Natural killer cell (primary cell): ENCODE measurements at regions of chr17 and their contacts with region 1.

Region 1: DNA sequence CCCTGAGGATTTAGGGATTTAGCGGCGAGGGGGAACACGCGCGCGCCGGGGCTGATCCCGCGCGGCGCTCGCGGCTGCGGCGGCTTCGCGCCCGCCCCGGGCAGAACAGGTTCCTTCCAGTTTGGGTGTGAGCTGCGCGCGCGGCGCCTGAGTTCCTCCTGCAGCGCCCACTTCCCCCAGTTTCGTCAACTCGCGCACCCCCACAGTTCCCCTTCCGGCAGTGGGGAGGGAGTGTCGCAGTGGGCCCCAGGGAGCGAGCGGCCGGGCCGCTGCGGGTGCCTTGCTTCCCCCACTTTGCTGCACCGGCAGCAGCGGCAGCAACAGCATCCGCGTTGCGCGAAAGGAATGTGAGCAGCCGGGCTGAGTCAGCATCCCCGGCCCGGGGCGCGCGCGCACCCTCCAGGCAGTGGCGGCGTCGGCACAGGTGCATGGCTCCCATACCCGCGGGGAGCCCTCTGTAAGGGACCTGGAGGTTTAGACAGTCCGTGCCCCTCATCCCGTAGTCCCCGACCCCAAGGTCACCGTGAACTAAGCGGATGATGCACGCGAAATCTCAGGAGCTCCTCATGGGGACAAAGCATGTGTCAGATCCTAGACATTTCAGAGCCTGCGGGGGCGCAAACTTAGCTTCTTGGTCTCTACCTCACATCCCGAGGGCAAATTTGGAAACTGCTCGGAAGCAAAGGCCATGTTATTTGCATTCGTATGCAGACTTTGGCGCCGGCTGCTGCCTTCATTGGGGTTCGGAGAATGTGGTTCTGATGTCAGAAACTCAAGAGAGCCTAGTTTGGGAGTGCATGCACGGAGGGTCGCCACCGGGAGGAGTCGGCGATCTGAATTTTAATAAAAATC is 775 bp downstream of the ARSG start:
- DNase-seq: peak; percentile 93 to 98
- ATAC-seq: peak; percentile 66 to 88 (median 75)
- H3K4me3 ChIP-seq: peak overlapping the region; percentile 56
- H3K4me3 Mint-ChIP-seq: peak overlapping the region; percentile 90
- H3K27ac ChIP-seq: peak overlapping the region; percentile 72
- H3K27ac Mint-ChIP-seq: peak overlapping the region; percentile 98 to 99
- H3K4me1 ChIP-seq: peaks cover 65% of the 10 kb centered on the region
- H3K4me1 Mint-ChIP-seq: peaks cover 79% of the 10 kb centered on the region in 2 donors
- H3K27me3 ChIP-seq: no peaks in the 10 kb centered on the region
- H3K27me3 Mint-ChIP-seq: no peaks in the 10 kb centered on the region
- CTCF ChIP-seq: no peak

Region 2: GRCh38 chr17:68221760-68222159 is 70.3 kb before region 1 on chr17:
- intact Hi-C with region 1: loop called (anchors 1 kb)
- DNase-seq: no peak
- ATAC-seq: peak in 1 of 3 donors; percentile 3
- H3K4me3 ChIP-seq: peak overlapping the region; percentile 66
- H3K4me3 Mint-ChIP-seq: peak overlapping the region; percentile 10
- H3K27ac ChIP-seq: peak overlapping the region; percentile 92
- H3K27ac Mint-ChIP-seq: peak overlapping the region; percentile 100
- H3K4me1 ChIP-seq: peaks cover 62% of the 10 kb centered on the region
- H3K4me1 Mint-ChIP-seq: peaks cover 67 to 70% of the 10 kb centered on the region in 2 donors
- H3K27me3 ChIP-seq: no peaks in the 10 kb centered on the region
- H3K27me3 Mint-ChIP-seq: no peaks in the 10 kb centered on the region
- CTCF ChIP-seq: no peak

Region 3: GRCh38 chr17:68247445-68248198 is 44.4 kb before region 1 on chr17 and contains the start of gene AMZ2:
- intact Hi-C with region 1: loop called (anchors 5 kb)
- DNase-seq: peak; percentile 99
- ATAC-seq: peak; percentile 81 to 95 (median 83)
- H3K4me3 ChIP-seq: peak within 1 kb of the TSS; percentile 95
- H3K4me3 Mint-ChIP-seq: peak within 1 kb of the TSS; percentile 82
- H3K27ac ChIP-seq: peak within 1 kb of the TSS; percentile 100
- H3K27ac Mint-ChIP-seq: peak within 1 kb of the TSS; percentile 99 to 100
- H3K4me1 ChIP-seq: peaks cover 37% of the 10 kb centered on the region
- H3K4me1 Mint-ChIP-seq: peaks cover 34 to 37% of the 10 kb centered on the region in 2 donors
- H3K27me3 ChIP-seq: no peaks in the 10 kb centered on the region
- H3K27me3 Mint-ChIP-seq: no peaks in the 10 kb centered on the region
- CTCF ChIP-seq: no peak
- total RNA-seq, gene AMZ2: 87.0 to 131 (median 107) TPM

Region 4: GRCh38 chr17:68318103-68318991 is 26.3 kb after region 1 on chr17:
- intact Hi-C with region 1: loop called (anchors 2 kb)
- DNase-seq: no peak
- ATAC-seq: no peak
- H3K4me3 ChIP-seq: no peak overlapping the region
- H3K4me3 Mint-ChIP-seq: no peak overlapping the region
- H3K27ac ChIP-seq: no peak overlapping the region
- H3K27ac Mint-ChIP-seq: no peak overlapping the region
- H3K4me1 ChIP-seq: peaks cover 58% of the 10 kb centered on the region
- H3K4me1 Mint-ChIP-seq: peaks cover 59 to 68% of the 10 kb centered on the region in 2 donors
- H3K27me3 ChIP-seq: no peaks in the 10 kb centered on the region
- H3K27me3 Mint-ChIP-seq: no peaks in the 10 kb centered on the region
- CTCF ChIP-seq: no peak

Region 5: DNA sequence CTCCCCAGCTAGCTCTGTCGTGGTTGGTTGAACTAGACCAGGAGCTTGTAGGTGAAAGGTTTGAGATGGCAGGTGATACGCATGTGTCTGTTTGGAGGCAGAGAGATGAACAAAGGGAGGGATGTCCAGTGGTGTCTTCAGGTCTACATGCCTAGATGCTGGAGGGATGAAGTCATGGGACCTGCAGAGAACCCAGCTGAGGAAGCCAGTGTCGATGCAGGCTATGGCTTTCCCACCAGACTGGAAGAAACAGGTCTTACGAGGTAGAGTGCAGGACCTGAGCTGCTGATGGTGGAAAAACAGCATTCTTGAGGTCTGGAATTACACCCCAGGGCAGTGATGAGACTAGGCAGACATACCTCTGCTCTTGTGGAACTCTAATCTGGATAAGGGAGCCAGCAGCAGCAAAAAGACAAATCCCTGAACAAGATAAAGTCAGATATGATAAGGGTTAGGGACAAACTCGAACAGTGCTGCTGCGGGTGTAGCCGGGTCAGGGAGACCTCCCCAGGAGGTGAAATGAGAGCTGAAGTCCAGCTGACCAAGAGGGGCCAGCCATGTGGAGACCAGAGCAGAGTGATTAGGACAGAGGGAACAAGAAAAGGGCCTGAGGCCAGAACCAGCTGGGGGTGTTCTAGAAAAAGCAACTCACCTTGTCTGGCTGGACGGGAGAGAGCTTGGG is 36.7 kb after region 1 on chr17:
- intact Hi-C with region 1: no loop called
- DNase-seq: no peak
- ATAC-seq: no peak
- H3K4me3 ChIP-seq: no peak overlapping the region
- H3K4me3 Mint-ChIP-seq: no peak overlapping the region
- H3K27ac ChIP-seq: no peak overlapping the region
- H3K27ac Mint-ChIP-seq: no peak overlapping the region
- H3K4me1 ChIP-seq: peaks cover 8% of the 10 kb centered on the region
- H3K4me1 Mint-ChIP-seq: peaks cover 40 to 44% of the 10 kb centered on the region in 2 donors
- H3K27me3 ChIP-seq: no peaks in the 10 kb centered on the region
- H3K27me3 Mint-ChIP-seq: no peaks in the 10 kb centered on the region
- CTCF ChIP-seq: no peak

Region 6: DNA sequence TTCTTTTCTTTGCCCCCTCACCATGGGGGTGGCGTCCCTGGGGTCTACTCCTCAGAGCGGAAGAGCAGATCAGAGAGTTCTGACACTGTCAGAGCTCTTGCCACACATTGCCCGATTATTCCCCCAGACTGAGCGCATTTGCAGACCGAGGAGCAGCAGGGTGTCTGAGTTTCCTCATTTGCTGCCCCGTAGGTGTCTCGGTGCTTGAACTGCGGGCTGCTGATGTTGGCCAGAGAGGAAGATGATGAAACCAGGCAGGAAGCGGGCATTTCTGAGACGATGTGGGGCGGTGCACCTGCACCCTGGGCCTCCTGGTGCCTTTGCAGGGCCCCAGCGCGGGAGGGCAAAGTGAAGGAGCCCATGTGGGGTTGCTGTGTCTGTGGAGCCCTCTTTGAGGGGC is 54.4 kb after region 1 on chr17:
- intact Hi-C with region 1: loop called (anchors 2 kb)
- DNase-seq: peak; percentile 59 to 79
- ATAC-seq: peak; percentile 77 to 89 (median 81)
- H3K4me3 ChIP-seq: no peak overlapping the region
- H3K4me3 Mint-ChIP-seq: peak overlapping the region; percentile 88
- H3K27ac ChIP-seq: peak overlapping the region; percentile 81
- H3K27ac Mint-ChIP-seq: peak overlapping the region; percentile 96 to 98
- H3K4me1 ChIP-seq: peaks cover 72% of the 10 kb centered on the region
- H3K4me1 Mint-ChIP-seq: peaks cover 71 to 80% of the 10 kb centered on the region in 2 donors
- H3K27me3 ChIP-seq: no peaks in the 10 kb centered on the region
- H3K27me3 Mint-ChIP-seq: no peaks in the 10 kb centered on the region
- CTCF ChIP-seq: no peak

Region 7: DNA sequence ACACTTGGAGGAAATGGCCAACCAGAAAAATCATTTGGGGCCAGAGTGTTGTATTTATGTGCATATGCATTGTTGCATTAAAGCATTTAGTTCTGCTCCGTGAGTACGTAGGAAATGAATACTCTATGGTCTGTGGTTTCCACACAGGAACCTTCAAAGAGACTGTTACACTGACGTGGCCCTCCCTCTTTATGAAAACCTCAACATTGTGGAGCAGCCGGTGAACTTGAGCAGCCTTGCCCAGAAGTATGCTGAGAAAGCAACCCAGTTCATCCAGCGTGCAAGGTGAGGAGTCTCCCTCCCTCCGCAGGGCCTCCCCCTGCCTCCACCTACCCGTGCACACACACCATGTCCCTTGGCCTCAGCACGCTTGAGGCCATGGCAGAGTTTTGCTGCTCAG is 64.5 kb after region 1 on chr17:
- intact Hi-C with region 1: loop called (anchors 1 kb)
- DNase-seq: peak; percentile 53 to 89
- ATAC-seq: peak; percentile 91 to 96 (median 93)
- H3K4me3 ChIP-seq: peak overlapping the region; percentile 5
- H3K4me3 Mint-ChIP-seq: peak overlapping the region; percentile 84
- H3K27ac ChIP-seq: peak overlapping the region; percentile 67
- H3K27ac Mint-ChIP-seq: peak overlapping the region; percentile 86 to 93
- H3K4me1 ChIP-seq: peaks cover 68% of the 10 kb centered on the region
- H3K4me1 Mint-ChIP-seq: peaks cover 65 to 68% of the 10 kb centered on the region in 2 donors
- H3K27me3 ChIP-seq: no peaks in the 10 kb centered on the region
- H3K27me3 Mint-ChIP-seq: no peaks in the 10 kb centered on the region
- CTCF ChIP-seq: no peak

Region 8: DNA sequence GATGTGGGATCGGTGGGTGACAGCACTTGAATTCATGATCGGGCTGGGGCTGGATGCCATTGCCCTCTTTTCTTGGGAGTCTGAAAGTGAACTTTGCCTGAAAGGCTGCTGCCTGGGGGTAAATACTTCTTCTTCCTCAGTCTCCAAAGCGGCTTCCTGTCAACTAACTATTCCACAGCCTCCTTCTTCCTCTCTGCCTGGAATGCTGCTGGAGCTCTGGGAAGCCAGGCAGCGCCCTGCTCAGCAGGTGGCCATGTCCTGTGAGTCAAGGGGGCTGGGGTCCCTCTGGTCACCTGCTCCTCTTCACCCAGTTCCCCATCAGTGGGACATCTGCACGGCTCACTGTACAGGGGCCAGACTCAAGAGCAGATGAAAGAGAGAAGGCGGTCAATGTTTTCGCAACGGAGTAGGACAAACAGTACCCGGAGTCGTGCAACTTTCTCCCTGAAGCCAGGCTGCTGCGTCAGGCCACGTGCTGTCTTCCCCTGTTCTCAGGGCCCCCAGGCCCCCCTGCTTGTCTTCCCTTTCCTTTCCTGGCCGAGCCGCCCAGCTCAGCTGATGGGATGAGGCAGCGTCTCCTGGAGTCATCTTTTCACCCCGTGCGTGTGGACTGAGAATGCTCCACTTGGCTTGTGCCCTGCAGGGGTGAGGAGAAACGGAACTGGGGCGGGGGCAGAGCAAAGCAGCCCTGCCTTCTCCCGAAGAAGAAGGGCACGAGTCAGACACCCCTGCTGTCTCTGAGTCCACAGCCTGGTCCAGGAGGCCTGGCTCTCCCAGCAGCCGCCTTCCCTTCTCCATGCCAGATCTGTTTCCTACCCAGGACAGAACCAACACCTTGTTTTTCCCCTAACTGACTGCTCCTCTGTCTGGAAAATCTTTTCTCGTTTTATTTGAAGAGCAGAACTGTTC is 86.0 kb after region 1 on chr17:
- intact Hi-C with region 1: no loop called
- DNase-seq: no peak
- ATAC-seq: peak in 1 of 3 donors; percentile 24
- H3K4me3 ChIP-seq: no peak overlapping the region
- H3K4me3 Mint-ChIP-seq: no peak overlapping the region
- H3K27ac ChIP-seq: no peak overlapping the region
- H3K27ac Mint-ChIP-seq: no peak overlapping the region
- H3K4me1 ChIP-seq: peaks cover under 1% of the 10 kb centered on the region
- H3K4me1 Mint-ChIP-seq: peaks cover 0 to 8% of the 10 kb centered on the region in 2 donors
- H3K27me3 ChIP-seq: no peaks in the 10 kb centered on the region
- H3K27me3 Mint-ChIP-seq: no peaks in the 10 kb centered on the region
- CTCF ChIP-seq: no peak

Region 9: DNA sequence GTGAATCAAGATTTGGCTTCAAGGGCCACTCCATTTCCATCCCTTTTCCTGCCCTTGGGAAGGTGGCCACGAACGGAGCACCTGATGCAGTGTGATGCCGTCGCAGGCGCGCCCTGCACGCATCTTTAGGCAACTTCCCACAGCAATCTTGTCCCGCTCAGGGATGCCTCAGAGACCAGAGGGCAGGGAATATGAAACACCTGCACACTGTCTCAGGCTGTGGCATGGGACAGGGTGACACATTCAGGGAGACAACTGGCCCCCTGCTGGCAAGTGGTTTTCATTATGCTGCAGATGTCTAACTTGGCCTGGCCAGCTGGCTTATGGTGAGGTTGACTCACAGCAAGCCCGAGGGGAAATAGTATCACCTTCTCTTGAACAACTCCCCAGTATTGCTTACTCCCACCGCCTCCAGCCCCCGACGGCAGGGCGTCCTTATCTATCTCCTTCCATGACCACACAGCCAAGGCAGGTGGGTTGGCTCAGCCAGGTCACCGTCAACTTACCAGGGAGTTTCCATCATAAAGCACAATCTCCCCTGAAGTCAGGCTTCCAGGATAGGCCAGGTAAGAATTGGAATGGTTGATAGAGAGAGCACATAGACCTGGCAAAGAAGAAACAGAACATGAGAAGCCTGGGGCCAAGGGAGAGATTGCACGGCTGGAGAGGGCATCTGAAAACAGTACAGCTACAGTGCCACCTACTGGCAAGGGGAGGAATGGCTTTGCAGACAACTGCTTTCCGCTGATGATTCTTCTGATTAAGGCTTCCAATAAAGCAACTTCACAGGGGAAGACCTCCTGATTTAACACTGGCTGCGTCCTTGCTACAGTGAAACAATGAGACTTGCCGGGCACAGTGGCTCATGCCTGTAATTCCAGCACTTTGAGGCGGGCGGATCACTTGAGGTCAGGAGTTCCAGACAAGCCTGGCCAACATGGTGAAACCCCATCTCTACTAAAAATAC is 144.1 kb after region 1 on chr17:
- intact Hi-C with region 1: loop called (anchors 10 kb)
- DNase-seq: peak; percentile 78 to 94
- ATAC-seq: peak; percentile 80 to 90 (median 81)
- H3K4me3 ChIP-seq: no peak overlapping the region
- H3K4me3 Mint-ChIP-seq: peak overlapping the region; percentile 87
- H3K27ac ChIP-seq: no peak overlapping the region
- H3K27ac Mint-ChIP-seq: peak overlapping the region; percentile 96
- H3K4me1 ChIP-seq: peaks cover 32% of the 10 kb centered on the region
- H3K4me1 Mint-ChIP-seq: peaks cover 42 to 56% of the 10 kb centered on the region in 2 donors
- H3K27me3 ChIP-seq: no peaks in the 10 kb centered on the region
- H3K27me3 Mint-ChIP-seq: no peaks in the 10 kb centered on the region
- CTCF ChIP-seq: peak; percentile 83

Region 10: DNA sequence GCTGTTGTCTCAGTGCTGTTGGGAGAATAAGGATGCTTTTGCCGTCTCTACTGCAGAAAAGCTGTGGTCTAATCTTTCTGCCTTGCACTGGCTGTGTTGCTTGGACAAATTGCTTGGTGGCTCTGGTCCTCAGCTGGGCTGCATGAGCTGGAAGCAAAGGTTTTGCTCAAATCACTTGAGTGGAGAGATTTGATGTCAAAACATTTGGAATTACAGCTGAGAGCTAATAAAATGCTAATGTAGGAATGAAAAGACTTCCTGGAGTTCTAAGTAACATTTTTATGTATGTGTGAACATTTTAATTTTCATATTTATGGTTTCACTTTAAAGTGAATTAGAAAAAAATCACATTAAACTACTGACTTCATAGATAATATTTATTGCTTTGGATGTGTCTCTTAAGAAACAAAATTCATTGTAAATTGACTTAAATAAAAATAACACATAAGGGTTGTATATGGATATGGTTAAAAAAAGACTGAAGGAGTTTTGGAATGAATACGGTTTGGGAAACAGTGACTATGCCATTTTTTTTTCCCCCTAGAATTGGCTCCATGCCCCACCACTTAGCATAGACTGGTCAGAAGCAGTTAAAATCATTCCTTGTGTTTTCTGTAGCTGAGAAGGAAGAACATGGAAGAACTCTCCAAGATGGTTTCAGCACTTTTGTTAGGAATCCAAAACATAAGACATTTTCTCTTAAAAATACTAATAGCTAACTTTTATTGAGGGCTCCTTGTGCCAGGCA is 348.3 kb after region 1 on chr17:
- intact Hi-C with region 1: no loop called
- DNase-seq: no peak
- ATAC-seq: no peak
- H3K4me3 ChIP-seq: no peak overlapping the region
- H3K4me3 Mint-ChIP-seq: no peak overlapping the region
- H3K27ac ChIP-seq: no peak overlapping the region
- H3K27ac Mint-ChIP-seq: no peak overlapping the region
- H3K4me1 ChIP-seq: no peaks in the 10 kb centered on the region
- H3K4me1 Mint-ChIP-seq: no peaks in the 10 kb centered on the region
- H3K27me3 ChIP-seq: peaks cover 5% of the 10 kb centered on the region
- H3K27me3 Mint-ChIP-seq: peaks cover 23 to 57% of the 10 kb centered on the region in 2 donors
- CTCF ChIP-seq: no peak